K562 (cell line): ENCODE measurements at regions of chr15 and their contacts with region 1.

Region 1: DNA sequence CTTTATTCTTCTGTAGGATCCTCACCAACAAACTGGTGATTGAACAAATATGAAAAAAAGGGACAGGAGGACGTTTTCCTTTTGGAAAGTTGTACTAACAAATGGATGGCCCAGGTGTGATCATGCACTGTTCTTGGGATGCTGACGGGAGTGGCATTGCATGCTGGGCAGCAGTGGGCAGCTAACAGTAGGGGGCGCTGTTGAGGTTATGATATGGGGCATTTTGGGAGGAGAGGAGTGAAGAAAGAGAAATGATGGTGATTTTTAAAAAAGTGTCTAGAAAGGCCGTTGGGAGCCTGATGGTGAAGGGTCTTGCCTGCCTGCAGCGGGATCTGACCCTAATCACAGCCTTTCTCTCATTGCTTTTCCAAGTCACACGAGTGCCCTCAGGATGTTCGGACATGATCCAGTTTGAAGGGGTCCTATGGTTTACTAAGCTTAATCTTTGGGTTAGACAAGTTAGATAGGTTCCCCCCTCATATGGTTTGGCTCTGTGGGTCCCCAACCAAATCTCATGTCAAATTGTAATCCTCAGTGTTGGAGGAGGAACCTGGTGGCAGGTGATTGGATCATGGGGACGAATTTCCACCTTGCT is 46.2 kb upstream of the PRTG start:
- DNase-seq: peak; percentile 59 to 72 (median 69)
- ATAC-seq: peak; percentile 95
- H3K4me3 ChIP-seq: no peak overlapping the region
- H3K27ac ChIP-seq: no peak overlapping the region
- H3K4me1 ChIP-seq: no peaks in the 10 kb centered on the region
- H3K27me3 ChIP-seq: no peaks in the 10 kb centered on the region; a peak in 1 of 5 replicates
- CTCF ChIP-seq: peak; percentile 66 to 92 (median 72)
- EP300 ChIP-seq: no peak
- POLR2A ChIP-seq: no peak
- RAD21 ChIP-seq: peak in 1 of 2 experiments; percentile 58; a peak in 2 of 4 replicates

Region 2: GRCh38 chr15:55799291-55800212 is 10.4 kb after region 1 on chr15:
- CTCF ChIA-PET with region 1: no interaction called
- POLR2A ChIA-PET with region 1: no interaction called
- in situ Hi-C with region 1: no loop called
- intact Hi-C with region 1: no loop called
- DNase-seq: peak; percentile 38 to 60 (median 48)
- ATAC-seq: peak; percentile 91
- H3K4me3 ChIP-seq: no peak overlapping the region
- H3K27ac ChIP-seq: no peak overlapping the region
- H3K4me1 ChIP-seq: no peaks in the 10 kb centered on the region
- H3K27me3 ChIP-seq: no peaks in the 10 kb centered on the region; a peak in 1 of 5 replicates
- CTCF ChIP-seq: peak; percentile 64 to 74 (median 66)
- EP300 ChIP-seq: no peak
- POLR2A ChIP-seq: no peak
- RAD21 ChIP-seq: peak; percentile 49 to 82

Region 3: GRCh38 chr15:55846116-55846707 is 57.0 kb after region 1 on chr15:
- CTCF ChIA-PET with region 1: no interaction called
- POLR2A ChIA-PET with region 1: no interaction called
- in situ Hi-C with region 1: no loop called
- intact Hi-C with region 1: loop called (anchors 5 kb)
- DNase-seq: peak; percentile 50 to 78 (median 71)
- ATAC-seq: peak; percentile 91
- H3K4me3 ChIP-seq: no peak overlapping the region
- H3K27ac ChIP-seq: no peak overlapping the region
- H3K4me1 ChIP-seq: no peaks in the 10 kb centered on the region
- H3K27me3 ChIP-seq: no peaks in the 10 kb centered on the region
- CTCF ChIP-seq: peak; percentile 68 to 79 (median 72)
- EP300 ChIP-seq: no peak
- POLR2A ChIP-seq: no peak
- RAD21 ChIP-seq: peak; percentile 49 to 65; a peak in 3 of 4 replicates

Region 4: DNA sequence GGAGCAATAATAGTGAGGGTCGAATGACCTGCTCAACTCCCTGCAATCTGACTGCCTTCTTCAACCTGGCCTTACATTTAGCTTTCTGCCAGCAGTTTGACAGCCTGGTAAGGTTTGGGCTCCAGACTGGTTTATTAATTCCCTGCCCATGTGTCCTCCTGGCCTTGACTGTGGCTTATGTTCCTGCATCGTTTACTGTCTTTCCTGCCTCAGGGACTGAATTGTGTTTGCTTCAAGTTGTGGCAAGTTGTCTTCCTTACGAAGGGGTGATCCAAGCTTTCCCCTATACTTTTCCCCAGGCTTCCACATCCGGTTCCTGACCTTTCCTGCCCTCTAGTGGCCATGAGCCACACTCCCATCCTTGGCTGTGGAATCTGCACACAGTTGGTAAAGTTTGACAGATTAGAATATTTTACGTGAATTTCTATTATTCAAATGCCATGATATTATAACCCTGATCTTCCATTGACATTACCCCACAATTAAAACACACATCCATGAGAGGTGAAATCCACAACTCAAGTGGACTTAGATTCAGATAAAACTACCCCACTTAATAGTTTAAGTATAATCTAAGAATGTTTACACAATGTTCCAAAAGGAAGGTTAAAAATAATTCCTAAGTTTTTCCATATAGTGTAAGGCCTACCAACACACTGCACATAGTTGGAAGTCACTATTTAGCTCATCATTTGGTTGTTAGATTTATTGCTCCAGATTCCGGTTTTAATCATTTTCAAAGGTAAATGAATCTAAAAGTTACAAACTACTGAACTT is 108.6 kb after region 1 on chr15:
- CTCF ChIA-PET with region 1: no interaction called
- POLR2A ChIA-PET with region 1: no interaction called
- in situ Hi-C with region 1: no loop called
- intact Hi-C with region 1: no loop called
- DNase-seq: peak; percentile 64 to 72 (median 66)
- ATAC-seq: peak; percentile 99
- H3K4me3 ChIP-seq: no peak overlapping the region
- H3K27ac ChIP-seq: peak overlapping the region; percentile 71
- H3K4me1 ChIP-seq: peaks cover 0 to 6% of the 10 kb centered on the region in 2 experiments; a peak in 3 of 5 replicates
- H3K27me3 ChIP-seq: no peaks in the 10 kb centered on the region
- CTCF ChIP-seq: peak; percentile 76 to 92 (median 83)
- EP300 ChIP-seq: no peak
- POLR2A ChIP-seq: no peak
- RAD21 ChIP-seq: peak in 1 of 2 experiments; percentile 55; a peak in 2 of 4 replicates

Region 5: GRCh38 chr15:55917881-55918296 is 128.7 kb after region 1 on chr15:
- CTCF ChIA-PET with region 1: no interaction called
- POLR2A ChIA-PET with region 1: no interaction called
- in situ Hi-C with region 1: no loop called
- intact Hi-C with region 1: no loop called
- DNase-seq: peak; percentile 6 to 28 (median 10)
- ATAC-seq: peak; percentile 47; the same call in 2 of the 3 replicates
- H3K4me3 ChIP-seq: no peak overlapping the region
- H3K27ac ChIP-seq: no peak overlapping the region
- H3K4me1 ChIP-seq: no peaks in the 10 kb centered on the region
- H3K27me3 ChIP-seq: no peaks in the 10 kb centered on the region
- CTCF ChIP-seq: peak; percentile 32 to 57 (median 49); a peak in 4 of 6 replicates
- EP300 ChIP-seq: no peak
- POLR2A ChIP-seq: no peak
- RAD21 ChIP-seq: 0 out of 4 replicates have a peak, but pooled peaks of 1 of the 2 experiments have one; percentile 6

Region 6: GRCh38 chr15:56428821-56429458 is 639.8 kb after region 1 on chr15:
- CTCF ChIA-PET with region 1: no interaction called
- POLR2A ChIA-PET with region 1: no interaction called
- in situ Hi-C with region 1: no loop called
- intact Hi-C with region 1: loop called (anchors 5 kb)
- DNase-seq: peak; percentile 8 to 36 (median 16)
- ATAC-seq: 0 out of 3 replicates have a peak, but pooled peaks have one; percentile 60
- H3K4me3 ChIP-seq: no peak overlapping the region
- H3K27ac ChIP-seq: no peak overlapping the region
- H3K4me1 ChIP-seq: no peaks in the 10 kb centered on the region
- H3K27me3 ChIP-seq: no peaks in the 10 kb centered on the region
- CTCF ChIP-seq: peak in 2 of 3 experiments; percentile 45 to 80; a peak in 4 of 6 replicates
- EP300 ChIP-seq: no peak
- POLR2A ChIP-seq: no peak
- RAD21 ChIP-seq: peak; percentile 81 to 97

Region 7: GRCh38 chr15:56719774-56720555 is 930.8 kb after region 1 on chr15:
- CTCF ChIA-PET with region 1: no interaction called
- POLR2A ChIA-PET with region 1: no interaction called
- in situ Hi-C with region 1: no loop called
- intact Hi-C with region 1: no loop called
- DNase-seq: no peak
- ATAC-seq: peak; percentile 34; the same call in 1 of the 3 replicates
- H3K4me3 ChIP-seq: no peak overlapping the region
- H3K27ac ChIP-seq: no peak overlapping the region
- H3K4me1 ChIP-seq: peaks cover 0 to 14% of the 10 kb centered on the region in 2 experiments
- H3K27me3 ChIP-seq: no peaks in the 10 kb centered on the region
- CTCF ChIP-seq: no peak
- EP300 ChIP-seq: no peak
- POLR2A ChIP-seq: no peak
- RAD21 ChIP-seq: no peak